GM10248 (cell line): ENCODE measurements at regions of chr19 and their contacts with region 1.

Region 1: GRCh38 chr19:13784731-13785452 is 10.4 kb upstream of the ZSWIM4 start:
- DNase-seq: peak; percentile 68
- CTCF ChIP-seq: peak; percentile 57

Region 2: DNA sequence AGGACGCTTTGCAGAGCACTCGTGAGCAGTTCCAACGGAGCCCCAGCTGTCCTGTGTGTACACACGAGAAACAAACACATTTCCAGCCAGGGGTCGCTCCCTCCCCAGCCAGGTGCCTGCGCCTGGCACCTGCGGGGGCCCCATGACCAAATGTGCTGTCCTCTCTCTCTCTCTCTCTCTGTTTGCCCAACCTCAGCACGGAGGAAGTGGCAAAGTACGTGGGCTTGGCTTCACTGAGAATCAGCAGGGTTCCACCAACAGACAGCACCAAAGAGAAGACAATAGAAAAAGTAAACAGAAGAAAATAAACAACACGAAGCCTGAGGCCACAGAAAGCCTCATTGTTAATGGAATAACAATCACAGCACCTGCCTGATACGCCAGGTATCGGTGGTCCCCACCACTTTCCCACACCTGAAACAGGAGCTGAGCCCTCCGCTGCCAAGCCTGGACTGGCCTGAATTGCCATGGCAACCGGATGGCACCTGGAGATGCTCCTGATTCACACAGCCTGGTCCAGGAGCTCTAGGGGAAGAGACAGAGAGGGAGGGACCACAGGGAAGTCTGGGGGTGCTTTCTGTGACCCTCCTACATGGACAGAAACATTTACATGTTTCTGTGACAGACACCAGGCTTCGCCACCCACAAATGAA is 174.7 kb before region 1 on chr19:
- CTCF ChIA-PET with region 1: no interaction called
- POLR2A ChIA-PET with region 1: no interaction called
- DNase-seq: no peak
- CTCF ChIP-seq: no peak

Region 3: DNA sequence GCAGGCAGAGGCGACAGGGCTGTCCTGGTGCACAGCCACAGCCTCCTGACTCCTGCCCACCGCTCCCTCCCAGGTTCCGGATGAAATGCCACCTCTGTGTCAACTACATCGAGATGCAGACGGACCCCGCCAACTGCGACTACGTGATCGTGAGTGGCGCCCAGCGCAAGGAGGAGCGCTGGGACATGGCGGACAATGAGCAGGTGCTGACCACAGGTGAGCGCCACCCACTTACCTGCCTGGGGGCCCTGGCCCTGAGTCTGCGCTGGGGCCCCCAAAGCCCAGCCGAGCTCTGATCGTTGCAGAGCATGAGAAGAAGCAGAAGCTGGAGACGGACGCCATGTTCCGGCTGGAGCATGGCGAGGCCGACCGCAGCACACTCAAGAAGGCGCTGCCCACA is 26.1 kb before region 1 on chr19:
- CTCF ChIA-PET with region 1: no interaction called
- POLR2A ChIA-PET with region 1: no interaction called
- DNase-seq: no peak
- CTCF ChIP-seq: no peak

Region 4: GRCh38 chr19:13774217-13775191 is 10.4 kb before region 1 on chr19 and contains the start of gene C19orf53:
- CTCF ChIA-PET with region 1: interaction called, 32 read pairs
- POLR2A ChIA-PET with region 1: interaction called, 3 read pairs
- DNase-seq: peak; percentile 94
- CTCF ChIP-seq: no peak

Region 5: DNA sequence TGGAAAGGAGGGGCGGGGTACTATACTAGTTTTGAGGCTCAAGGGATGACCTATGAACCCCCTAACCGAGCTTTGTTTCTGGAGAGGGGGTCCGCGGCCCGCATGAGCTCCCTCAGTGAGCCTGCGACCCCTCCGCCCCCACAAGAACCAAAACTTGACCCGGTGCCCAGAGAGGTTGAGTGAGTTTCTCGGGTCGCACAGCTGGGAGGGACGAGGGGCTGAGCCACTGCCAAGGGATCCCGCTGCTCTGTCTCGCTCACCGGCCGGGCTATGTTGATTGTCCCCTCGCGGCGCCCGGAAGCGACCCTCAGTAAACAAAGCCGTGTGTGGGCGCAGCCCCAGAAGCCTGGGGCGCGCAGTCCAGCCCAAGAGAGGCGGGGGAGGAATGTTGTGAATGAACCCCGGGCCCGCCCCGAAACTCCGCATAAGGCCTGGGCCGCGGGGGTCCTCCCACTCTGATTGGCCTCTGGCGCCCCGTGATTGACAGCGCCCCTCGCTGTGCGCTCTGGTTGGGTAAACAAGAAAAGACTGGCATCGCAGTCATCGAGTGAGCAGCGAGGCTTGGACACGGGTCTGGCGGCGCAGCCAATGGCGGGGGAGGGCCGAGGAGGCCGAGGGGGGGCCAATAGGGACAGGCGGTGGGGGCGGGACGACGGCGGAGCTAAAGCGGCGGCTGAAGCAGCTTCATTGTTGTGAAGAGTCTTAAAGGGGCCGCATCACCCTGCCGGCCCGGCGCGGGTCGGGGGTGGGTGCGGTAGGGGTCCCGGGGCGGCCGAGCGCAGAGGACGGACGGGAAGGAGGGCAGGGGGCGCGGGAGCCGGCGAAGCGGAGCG is 10.1 kb after region 1 on chr19 and contains the start of gene ZSWIM4:
- CTCF ChIA-PET with region 1: interaction called, 10 read pairs
- POLR2A ChIA-PET with region 1: no interaction called
- DNase-seq: peak; percentile 98
- CTCF ChIP-seq: no peak

Region 6: DNA sequence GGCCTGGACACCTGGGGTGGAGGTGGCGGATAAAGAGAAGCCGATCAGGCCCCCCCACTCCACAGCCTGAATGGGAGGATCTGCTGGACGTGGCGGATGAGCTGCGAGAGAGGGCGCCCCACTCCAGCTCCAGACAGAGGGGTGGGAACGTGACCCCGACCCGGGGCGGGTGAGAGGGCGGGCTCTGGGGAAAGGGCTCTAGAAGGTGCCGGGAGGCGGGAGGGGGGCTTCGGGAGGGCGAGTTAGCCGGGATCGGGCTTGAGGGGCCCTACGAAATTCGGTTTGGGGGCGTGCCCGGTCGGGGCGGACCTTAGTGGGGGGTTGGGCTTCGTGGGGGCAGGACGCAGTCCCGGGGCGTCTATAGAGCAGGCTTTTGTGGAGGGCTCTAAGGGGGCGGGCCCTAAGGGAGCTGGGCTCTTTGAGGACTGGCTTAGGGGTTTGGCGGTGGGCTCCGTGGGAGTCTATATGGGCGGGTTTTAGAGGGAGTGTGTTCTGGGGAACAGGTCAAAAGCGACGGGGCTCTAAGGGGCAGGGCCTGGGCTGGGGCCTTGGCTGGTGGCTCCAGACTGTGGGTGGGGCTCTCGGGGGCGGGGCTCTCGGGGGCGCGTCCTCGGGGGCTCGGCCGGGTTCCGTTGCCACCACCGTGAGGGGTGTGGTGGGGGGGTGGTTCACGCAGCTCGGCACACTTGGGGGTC is 88.0 kb after region 1 on chr19:
- CTCF ChIA-PET with region 1: interaction called, 15 read pairs
- POLR2A ChIA-PET with region 1: no interaction called
- DNase-seq: peak; percentile 65
- CTCF ChIP-seq: peak; percentile 47

Region 7: DNA sequence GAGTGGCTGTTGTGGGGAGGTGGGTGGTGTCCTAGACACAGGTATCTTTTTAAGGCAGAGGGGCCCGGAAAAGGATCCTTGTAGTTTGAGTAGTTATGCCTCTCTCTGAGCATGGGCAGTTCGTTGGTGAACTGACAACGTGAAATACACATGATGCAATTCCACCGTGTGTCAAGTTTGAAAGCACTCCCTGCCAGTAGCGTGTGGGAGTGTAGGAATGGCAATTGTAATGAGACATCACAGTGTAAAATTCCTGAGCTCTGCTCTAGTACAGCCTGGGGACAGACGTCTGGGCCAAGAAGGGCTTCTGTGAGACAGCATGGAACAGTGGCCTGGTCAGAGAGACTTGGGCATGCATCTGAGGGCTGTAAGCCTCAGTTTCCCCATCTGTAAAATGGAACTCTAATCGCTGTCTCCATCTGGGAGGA is 361.9 kb after region 1 on chr19:
- CTCF ChIA-PET with region 1: no interaction called
- POLR2A ChIA-PET with region 1: no interaction called
- DNase-seq: no peak
- CTCF ChIP-seq: no peak